ENCODE measurements at regions of chr6 and their contacts with region 1.

Region 1: DNA sequence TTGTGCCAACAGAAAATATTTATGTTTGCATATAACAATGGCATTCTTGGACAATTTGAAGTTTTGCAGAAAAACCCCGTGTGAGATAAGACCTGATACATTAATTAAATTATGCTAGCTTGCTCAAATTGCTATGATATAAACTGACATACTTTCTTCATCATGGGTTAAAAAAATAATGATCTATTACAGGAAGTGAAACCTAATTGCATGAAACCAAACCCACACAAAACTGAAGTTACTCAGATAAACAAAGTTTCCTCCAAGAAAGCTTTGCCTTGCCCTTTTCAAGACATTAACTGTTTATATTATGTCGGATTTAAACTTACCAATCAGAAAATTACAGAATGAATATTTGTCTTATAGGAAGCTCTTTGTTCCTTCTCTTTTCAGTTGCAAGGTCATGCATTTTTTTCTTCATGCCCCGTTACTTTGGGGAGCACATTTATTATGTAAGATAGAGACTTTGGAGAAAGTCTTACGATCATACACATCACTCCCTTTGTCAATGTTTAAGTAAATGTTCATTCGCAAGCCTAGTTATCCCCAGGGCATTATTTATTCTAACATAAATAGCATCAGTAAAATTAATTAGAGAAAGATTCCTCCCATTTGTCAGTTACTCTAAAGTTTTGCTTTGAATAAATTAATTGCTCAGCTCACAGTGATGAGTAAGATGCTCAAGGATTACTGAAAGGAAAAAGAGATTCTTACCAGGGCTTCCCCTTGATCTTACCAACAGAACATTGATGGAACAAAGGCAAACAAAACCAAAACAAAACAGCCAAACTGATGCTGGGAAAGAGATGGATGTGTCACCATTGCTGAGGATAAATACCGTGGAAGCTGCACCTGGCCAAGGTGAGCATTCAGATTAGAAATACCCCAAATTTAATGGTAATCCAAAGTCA is 14.8 kb upstream of the TMEM244 start:
- DNase-seq: no peak
- H3K4me3 Mint-ChIP-seq: no peak overlapping the region
- H3K27ac Mint-ChIP-seq: peak overlapping the region; percentile 18
- H3K4me1 Mint-ChIP-seq: peaks cover 13% of the 10 kb centered on the region
- H3K27me3 Mint-ChIP-seq: peaks cover 4% of the 10 kb centered on the region

Region 2: DNA sequence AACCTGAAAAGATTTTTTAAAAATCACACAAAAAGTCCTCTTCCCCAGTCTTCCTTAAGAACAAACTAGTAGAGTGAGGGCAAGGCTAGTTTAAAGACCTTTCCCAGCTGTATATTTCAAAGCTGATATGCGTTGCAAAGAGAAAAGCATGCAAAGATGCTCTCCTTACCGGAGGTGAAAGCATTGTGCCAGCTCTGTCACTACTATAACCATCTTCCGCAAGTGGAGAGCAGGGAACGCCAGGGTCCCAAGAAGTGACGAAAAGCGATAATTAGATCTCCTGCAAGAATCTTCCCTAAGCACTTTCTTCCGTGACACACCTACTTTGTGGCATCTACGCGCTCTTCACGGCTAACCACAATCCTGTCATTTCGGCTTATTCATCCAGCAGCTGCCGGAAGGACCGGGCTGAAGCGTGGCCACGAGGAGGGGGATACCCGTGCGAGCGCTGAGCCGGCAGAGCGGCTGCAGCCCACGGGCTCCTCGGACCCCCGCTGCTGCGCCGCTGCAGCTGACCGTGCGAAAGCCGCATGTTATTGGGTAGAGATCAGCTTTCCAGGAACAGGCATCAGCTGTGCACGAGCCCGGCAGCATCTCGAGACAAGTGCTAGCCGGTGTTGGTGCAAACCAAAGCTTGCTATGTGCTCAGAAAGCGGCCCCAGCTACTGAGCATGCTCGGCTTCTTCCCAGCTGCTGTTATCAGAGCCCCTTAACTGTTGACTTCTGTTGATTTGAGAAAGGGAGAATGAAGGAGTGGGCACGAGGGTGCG is 108.7 kb before region 1 on chr6:
- intact Hi-C with region 1: loop called (anchors 5 kb)
- DNase-seq: peak; percentile 66
- H3K4me3 Mint-ChIP-seq: peak overlapping the region; percentile 83
- H3K27ac Mint-ChIP-seq: peak overlapping the region; percentile 66
- H3K4me1 Mint-ChIP-seq: peaks cover 37% of the 10 kb centered on the region
- H3K27me3 Mint-ChIP-seq: peaks cover 55% of the 10 kb centered on the region

Measured in activated T-helper 1 cell treated with anti-CD3 and anti-CD28 coated beads, Interleukin-12 subunit alpha, Interleukin-12 subunit beta, Interleukin-2, Interleukin-4 antibody, amounts not matched to agents 30 ng/mL and 10 ng/mL and 1 ng/mL, durations not matched to agents 14 hours and 24 hours and 36 hours (primary cell).